HEK293 (cell line): ENCODE measurements at regions of chr20 and their contacts with region 1.

Region 1: DNA sequence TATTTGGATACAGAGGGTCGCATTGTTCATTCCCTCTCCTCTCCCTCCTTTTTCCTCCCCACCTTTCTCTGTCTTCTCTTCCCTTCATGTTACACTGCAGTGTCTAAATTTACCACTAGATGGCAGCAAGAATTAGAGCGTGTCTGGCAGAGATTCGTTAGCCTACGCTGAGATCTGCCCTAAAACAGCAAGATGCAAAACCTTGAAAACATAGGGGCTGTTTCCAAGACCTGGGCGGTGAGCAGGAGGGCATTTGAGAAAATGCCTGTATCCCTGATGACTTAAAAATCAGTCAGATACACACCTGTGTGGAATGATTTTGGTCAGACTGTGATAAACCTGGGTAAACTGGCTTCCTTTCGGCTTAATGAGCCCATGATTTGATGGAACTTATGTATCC is 101.5 kb upstream of the ISM1 start:
- H3K4me3 ChIP-seq: no peak overlapping the region
- H3K27ac ChIP-seq: no peak overlapping the region
- H3K4me1 ChIP-seq: no peaks in the 10 kb centered on the region
- CTCF ChIP-seq: peak; percentile 68

Region 2: GRCh38 chr20:12925214-12925755 is 194.3 kb before region 1 on chr20:
- CTCF ChIA-PET with region 1: interaction called, 10 read pairs
- POLR2A ChIA-PET with region 1: no interaction called
- H3K4me3 ChIP-seq: no peak overlapping the region
- H3K27ac ChIP-seq: no peak overlapping the region
- H3K4me1 ChIP-seq: peaks cover 8% of the 10 kb centered on the region
- CTCF ChIP-seq: peak; percentile 76

Region 3: DNA sequence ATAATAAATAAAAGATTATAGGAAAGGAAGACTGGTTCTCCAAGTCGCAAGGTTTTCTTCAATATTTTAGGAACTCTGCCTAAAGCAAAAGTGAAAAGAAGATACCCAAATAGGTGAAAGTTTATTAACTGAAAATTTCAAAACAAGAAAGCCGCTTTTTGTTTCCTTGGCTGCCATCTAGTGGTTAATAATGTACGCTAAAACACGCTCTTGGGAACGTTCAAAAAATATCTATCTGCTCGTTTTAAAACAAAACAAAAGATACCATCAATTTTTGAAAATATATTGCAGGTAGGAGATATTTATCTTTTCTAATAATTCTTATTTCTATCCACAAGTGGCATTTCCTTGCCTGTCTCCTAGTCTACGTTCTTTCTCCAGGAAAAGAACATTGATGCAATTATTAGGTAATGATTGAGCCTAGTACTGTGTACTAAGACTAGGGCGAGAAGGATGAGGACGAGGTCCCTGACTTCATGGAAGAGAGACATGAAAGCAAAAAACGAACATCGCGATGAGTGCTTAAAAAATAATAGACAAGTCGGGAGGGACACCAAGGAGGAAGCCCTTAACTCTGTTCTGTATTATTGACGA is 13.6 kb before region 1 on chr20:
- CTCF ChIA-PET with region 1: interaction called, 21 read pairs
- POLR2A ChIA-PET with region 1: no interaction called
- H3K4me3 ChIP-seq: no peak overlapping the region
- H3K27ac ChIP-seq: no peak overlapping the region
- H3K4me1 ChIP-seq: no peaks in the 10 kb centered on the region
- CTCF ChIP-seq: no peak

Region 4: GRCh38 chr20:13142143-13142542 is 22.6 kb after region 1 on chr20:
- CTCF ChIA-PET with region 1: interaction called, 14 read pairs
- POLR2A ChIA-PET with region 1: no interaction called
- H3K4me3 ChIP-seq: no peak overlapping the region
- H3K27ac ChIP-seq: no peak overlapping the region
- H3K4me1 ChIP-seq: no peaks in the 10 kb centered on the region
- CTCF ChIP-seq: no peak

Region 5: DNA sequence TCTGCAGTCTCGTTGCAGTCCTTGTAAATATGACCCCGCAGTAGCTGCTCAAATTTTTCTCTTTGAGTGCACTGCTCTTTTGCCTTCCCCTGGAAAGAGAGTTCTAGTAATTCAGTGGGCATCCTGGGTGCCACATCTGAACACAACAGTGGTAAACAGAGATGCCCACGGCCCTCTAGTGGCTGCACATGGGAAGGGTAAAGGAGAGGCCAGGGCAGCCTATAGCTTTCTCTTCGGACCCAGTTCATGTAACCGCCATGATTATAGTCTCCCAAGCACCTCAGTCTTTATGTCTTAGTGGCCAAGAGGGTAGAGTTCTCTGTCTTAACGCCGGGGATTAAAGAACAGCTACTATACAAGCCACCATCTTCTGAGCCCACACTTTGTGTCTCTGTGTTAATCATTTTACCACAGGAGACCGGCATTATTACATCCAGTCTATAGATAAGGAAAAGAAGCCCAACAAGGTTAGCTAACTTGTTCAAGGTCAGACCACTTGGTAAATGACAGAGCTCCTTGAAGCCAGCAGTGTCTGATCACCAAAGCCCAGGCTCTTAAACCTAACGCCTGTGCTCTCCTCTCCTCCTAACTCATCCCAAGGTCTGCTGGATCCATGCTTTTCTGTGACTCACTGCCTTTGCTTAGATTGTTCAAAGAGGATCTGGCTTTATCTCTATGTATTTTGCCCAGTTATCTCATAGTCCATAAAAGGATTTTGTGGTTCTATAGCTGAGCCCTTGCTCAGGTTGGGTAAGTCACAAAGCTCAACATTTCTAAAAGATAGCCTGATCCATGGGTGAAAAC is 183.3 kb after region 1 on chr20:
- CTCF ChIA-PET with region 1: interaction called, 47 read pairs
- POLR2A ChIA-PET with region 1: no interaction called
- H3K4me3 ChIP-seq: no peak overlapping the region
- H3K27ac ChIP-seq: no peak overlapping the region
- H3K4me1 ChIP-seq: no peaks in the 10 kb centered on the region
- CTCF ChIP-seq: no peak

Region 6: GRCh38 chr20:13771853-13772453 is 652.4 kb after region 1 on chr20:
- CTCF ChIA-PET with region 1: interaction called, 29 read pairs
- POLR2A ChIA-PET with region 1: no interaction called
- H3K4me3 ChIP-seq: no peak overlapping the region
- H3K27ac ChIP-seq: no peak overlapping the region
- H3K4me1 ChIP-seq: no peaks in the 10 kb centered on the region
- CTCF ChIP-seq: no peak